Endothelial cell of umbilical vein (primary cell): ENCODE measurements at regions of chr1 and their contacts with region 1.

Region 1: GRCh38 chr1:160607011-160607671 is 27.8 kb upstream of the CD84 start:
- DNase-seq: peak; percentile 70
- H3K4me3 ChIP-seq: no peak overlapping the region
- H3K27ac ChIP-seq: no peak overlapping the region
- H3K4me1 ChIP-seq: no peaks in the 10 kb centered on the region
- H3K27me3 ChIP-seq: peaks cover 18 to 20% of the 10 kb centered on the region in 2 experiments
- CTCF ChIP-seq: peak; percentile 60 to 65
- POLR2A ChIP-seq: no peak

Region 2: DNA sequence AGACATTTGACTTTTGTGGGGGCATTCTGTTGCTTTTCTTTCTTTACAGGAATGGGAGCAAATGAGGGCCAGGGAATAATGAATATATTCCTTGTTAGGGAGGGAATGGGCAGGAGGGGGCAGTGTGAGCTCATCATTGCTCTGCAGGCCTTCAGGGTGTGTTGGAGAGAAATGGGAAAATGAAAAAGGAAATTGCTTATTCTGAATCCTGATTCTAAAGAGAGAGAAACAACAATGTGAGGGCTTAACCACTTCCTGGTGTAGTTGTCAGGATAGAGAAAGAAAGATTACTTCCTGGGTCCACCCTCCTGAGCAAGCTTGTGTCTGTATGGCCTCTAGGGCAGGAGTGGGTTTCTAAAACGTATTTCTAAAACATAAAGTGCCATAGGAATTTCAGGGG is 178.5 kb before region 1 on chr1:
- CTCF ChIA-PET with region 1: interaction called, 37 read pairs
- POLR2A ChIA-PET with region 1: no interaction called
- dilution Hi-C with region 1: no loop called
- intact Hi-C with region 1: loop called (anchors 1 kb)
- DNase-seq: peak; percentile 30
- H3K4me3 ChIP-seq: no peak overlapping the region
- H3K27ac ChIP-seq: no peak overlapping the region
- H3K4me1 ChIP-seq: no peaks in the 10 kb centered on the region
- H3K27me3 ChIP-seq: peaks cover 2 to 18% of the 10 kb centered on the region in 2 experiments
- CTCF ChIP-seq: peak; percentile 30 to 59
- POLR2A ChIP-seq: no peak

Region 3: GRCh38 chr1:160544647-160545046 is 62.5 kb before region 1 on chr1:
- CTCF ChIA-PET with region 1: interaction called, 5 read pairs
- POLR2A ChIA-PET with region 1: no interaction called
- dilution Hi-C with region 1: no loop called
- intact Hi-C with region 1: loop called (anchors 2 kb)
- DNase-seq: no peak
- H3K4me3 ChIP-seq: no peak overlapping the region
- H3K27ac ChIP-seq: no peak overlapping the region
- H3K4me1 ChIP-seq: no peaks in the 10 kb centered on the region
- H3K27me3 ChIP-seq: peaks cover 0 to 3% of the 10 kb centered on the region in 2 experiments
- CTCF ChIP-seq: peak; percentile 14 to 43
- POLR2A ChIP-seq: no peak